Right ventricle myocardium superior (tissue), 1 donor: ENCODE measurements at regions of chr14 and their contacts with region 1.

Region 1: GRCh38 chr14:70622111-70622712 is 19.5 kb upstream of the TTC9 start:
- DNase-seq: no peak
- ATAC-seq: peak; percentile 55

Region 2: DNA sequence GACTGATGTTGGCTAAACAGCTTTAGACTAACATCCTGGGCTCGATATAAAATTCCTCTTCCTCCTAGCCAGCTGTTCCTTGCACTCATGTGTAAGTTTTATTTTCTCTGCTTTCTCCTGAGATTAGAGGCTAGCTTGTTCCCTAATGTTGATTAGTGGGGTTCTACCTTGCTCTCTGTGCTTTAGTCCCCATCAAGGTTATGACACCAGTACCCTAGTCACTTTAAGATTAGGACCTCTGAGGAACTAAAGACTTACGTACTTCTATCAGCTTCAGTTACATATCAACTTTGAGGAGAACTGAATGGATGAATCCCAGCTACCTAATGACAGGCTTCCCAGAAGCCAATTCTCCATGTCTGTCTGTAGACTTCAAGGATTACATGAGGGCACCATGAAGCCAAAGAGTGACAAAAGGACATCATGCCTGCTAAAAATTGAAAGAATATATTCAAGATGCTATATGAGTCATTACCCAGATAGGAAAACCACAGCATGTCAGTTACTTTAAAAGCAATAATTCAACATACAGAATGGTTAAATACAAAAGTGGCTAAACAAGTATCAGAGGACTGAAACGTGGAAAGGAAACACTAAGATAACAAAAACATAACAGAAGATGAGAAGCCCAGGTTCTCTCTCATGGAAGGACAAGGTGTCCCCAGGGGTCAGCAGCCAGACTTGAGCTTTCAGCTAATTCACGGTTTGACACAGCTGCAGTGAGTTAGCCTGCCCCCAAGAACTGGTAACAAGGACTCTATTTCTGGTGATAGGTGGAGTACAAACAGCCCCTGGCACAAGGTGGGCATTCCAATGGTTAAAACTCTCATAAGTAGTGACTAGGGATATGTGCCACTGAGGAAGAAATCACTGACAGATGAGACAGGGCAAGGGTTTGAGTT is 107.8 kb before region 1 on chr14:
- intact Hi-C with region 1: no loop called
- DNase-seq: no peak
- ATAC-seq: no peak

Region 3: GRCh38 chr14:70714055-70714621 is 91.9 kb after region 1 on chr14:
- intact Hi-C with region 1: loop called (anchors 5 kb)
- DNase-seq: no peak
- ATAC-seq: no peak

Region 4: DNA sequence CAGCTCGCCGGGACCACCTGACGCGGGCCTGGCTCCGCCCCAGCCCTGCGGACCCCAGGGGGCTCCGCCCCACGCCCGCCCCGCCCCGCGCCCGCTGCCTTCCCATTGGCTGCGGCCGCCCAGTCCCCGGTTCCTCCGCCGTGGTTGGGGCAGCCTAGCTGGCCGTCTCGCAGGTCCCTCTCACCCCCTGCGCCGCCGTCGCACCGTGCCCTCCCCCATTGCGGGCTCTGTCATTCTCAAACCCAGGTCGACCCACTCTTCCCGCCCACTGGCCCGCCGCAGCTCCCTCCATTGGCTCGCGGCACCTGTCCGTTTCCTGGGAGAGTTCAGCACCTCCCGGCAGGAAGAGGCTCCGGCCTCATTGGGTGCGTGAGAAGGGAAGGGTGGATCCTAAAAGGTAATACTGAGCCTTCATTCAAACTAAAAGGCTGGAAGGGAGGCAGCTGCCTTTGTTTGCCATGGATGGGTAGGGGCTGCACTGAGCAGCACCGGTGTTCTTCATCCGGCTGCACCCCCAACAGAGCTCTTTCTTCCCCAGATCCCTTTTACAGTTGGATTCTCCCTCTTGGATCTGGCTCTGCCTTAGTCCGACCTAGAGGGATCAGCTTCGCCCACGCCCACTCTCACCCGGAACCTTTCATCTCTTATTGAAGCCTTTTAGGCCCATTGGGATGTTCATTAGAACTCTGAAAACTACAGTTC is 187.5 kb after region 1 on chr14:
- intact Hi-C with region 1: loop called (anchors 10 kb)
- DNase-seq: peak; percentile 90
- ATAC-seq: peak; percentile 97